ENCODE measurements at regions of chr13 and their contacts with region 1.

Region 1: GRCh38 chr13:72839831-72840426 is 58.0 kb downstream of the PIBF1 start:
- DNase-seq: peak; percentile 78
- H3K4me3 ChIP-seq: no peak overlapping the region
- H3K27ac ChIP-seq: no peak overlapping the region
- H3K4me1 ChIP-seq: no peaks in the 10 kb centered on the region
- H3K27me3 ChIP-seq: no peaks in the 10 kb centered on the region
- CTCF ChIP-seq: peak; percentile 54

Region 2: GRCh38 chr13:72617186-72617585 is 222.7 kb before region 1 on chr13:
- intact Hi-C with region 1: no loop called
- DNase-seq: no peak
- H3K4me3 ChIP-seq: no peak overlapping the region
- H3K27ac ChIP-seq: no peak overlapping the region
- H3K4me1 ChIP-seq: no peaks in the 10 kb centered on the region
- H3K27me3 ChIP-seq: no peaks in the 10 kb centered on the region
- CTCF ChIP-seq: no peak

Region 3: GRCh38 chr13:73039181-73040108 is 199.5 kb after region 1 on chr13:
- intact Hi-C with region 1: loop called (anchors 10 kb)
- DNase-seq: no peak
- H3K4me3 ChIP-seq: no peak overlapping the region
- H3K27ac ChIP-seq: peak overlapping the region; percentile 75
- H3K4me1 ChIP-seq: no peaks in the 10 kb centered on the region
- H3K27me3 ChIP-seq: no peaks in the 10 kb centered on the region
- CTCF ChIP-seq: no peak

Region 4: GRCh38 chr13:73075546-73075945 is 235.6 kb after region 1 on chr13:
- intact Hi-C with region 1: no loop called
- DNase-seq: peak; percentile 42
- H3K4me3 ChIP-seq: no peak overlapping the region
- H3K27ac ChIP-seq: peak overlapping the region; percentile 28
- H3K4me1 ChIP-seq: peaks cover 5% of the 10 kb centered on the region
- H3K27me3 ChIP-seq: no peaks in the 10 kb centered on the region
- CTCF ChIP-seq: no peak